Sciatic nerve (tissue), 2 donors: ENCODE measurements at regions of chr2 and their contacts with region 1.

Region 1: DNA sequence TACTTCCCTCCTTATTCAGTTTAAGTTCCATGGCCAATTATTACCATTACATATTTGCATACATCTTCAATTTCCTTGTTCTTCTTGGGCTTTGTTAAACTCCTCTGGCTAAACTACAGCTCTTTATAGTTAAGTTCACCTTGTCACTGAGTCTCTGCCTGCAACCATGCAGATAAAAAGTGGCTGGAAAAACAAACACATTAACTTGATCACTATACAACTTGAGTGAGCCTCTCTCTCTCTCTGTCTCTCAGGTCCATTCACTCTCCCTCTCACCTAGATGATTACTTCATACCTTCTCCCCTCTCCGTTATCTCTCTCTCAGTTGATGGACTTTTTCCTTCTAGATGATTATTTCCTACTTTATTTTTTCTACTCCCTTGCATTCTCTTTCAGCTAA is 30.3 kb downstream of the GCFC2 start:
- DNase-seq: no peak
- ATAC-seq: no peak

Region 2: DNA sequence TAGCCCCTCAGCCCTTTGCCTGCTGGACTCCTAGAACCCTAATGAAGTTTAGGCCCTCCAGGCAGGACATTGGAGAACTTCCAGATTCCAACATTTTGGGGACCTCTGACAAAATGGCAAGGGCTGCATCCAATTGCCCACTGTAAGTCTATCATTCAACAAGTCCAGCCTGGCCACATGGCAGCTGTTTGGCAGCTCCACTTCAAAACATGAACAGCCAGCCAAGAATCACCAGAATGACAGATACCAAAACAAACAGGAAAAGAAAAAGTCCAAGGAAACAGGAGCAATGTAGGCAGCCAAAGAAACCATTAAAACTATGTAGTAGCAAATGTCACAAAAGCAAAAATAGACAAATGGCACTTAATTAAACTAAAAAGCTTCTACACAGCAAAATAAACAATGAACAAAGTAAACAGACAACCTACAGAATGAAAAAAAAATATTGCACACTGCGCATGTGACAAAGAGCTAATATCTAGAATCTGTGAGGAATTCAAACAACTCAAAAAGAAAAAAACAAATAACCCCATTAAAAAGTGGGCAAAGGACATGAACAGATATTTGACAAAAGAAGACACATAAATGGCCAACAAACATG is 1362.6 kb before region 1 on chr2:
- intact Hi-C with region 1: no loop called
- DNase-seq: no peak
- ATAC-seq: no peak

Region 3: GRCh38 chr2:75646583-75647425 is 33.6 kb before region 1 on chr2 and contains the start of gene MRPL19:
- intact Hi-C with region 1: no loop called
- DNase-seq: peak; percentile 88
- ATAC-seq: peak; percentile 99
- total RNA-seq, gene MRPL19: 48.3 TPM

Region 4: GRCh38 chr2:76977484-76978400 is 1297.3 kb after region 1 on chr2:
- intact Hi-C with region 1: loop called (anchors 10 kb)
- DNase-seq: no peak
- ATAC-seq: no peak